HCT116 (cell line): ENCODE measurements at regions of chr19 and their contacts with region 1.

Region 1: GRCh38 chr19:12736995-12737834 is at the start of gene GET3:
- DNase-seq: peak; percentile 100
- ATAC-seq: peak; percentile 86
- H3K4me3 ChIP-seq: peak within 1 kb of the TSS; percentile 88 to 89
- H3K27ac ChIP-seq: peak within 1 kb of the TSS; percentile 78
- H3K4me1 ChIP-seq: peaks cover 25 to 39% of the 10 kb centered on the region in 2 experiments
- H3K27me3 ChIP-seq: no peaks in the 10 kb centered on the region
- CTCF ChIP-seq: no peak
- POLR2A ChIP-seq: peak; percentile 81
- RAD21 ChIP-seq: no peak
- total RNA-seq, gene GET3: 77.6 TPM

Region 2: DNA sequence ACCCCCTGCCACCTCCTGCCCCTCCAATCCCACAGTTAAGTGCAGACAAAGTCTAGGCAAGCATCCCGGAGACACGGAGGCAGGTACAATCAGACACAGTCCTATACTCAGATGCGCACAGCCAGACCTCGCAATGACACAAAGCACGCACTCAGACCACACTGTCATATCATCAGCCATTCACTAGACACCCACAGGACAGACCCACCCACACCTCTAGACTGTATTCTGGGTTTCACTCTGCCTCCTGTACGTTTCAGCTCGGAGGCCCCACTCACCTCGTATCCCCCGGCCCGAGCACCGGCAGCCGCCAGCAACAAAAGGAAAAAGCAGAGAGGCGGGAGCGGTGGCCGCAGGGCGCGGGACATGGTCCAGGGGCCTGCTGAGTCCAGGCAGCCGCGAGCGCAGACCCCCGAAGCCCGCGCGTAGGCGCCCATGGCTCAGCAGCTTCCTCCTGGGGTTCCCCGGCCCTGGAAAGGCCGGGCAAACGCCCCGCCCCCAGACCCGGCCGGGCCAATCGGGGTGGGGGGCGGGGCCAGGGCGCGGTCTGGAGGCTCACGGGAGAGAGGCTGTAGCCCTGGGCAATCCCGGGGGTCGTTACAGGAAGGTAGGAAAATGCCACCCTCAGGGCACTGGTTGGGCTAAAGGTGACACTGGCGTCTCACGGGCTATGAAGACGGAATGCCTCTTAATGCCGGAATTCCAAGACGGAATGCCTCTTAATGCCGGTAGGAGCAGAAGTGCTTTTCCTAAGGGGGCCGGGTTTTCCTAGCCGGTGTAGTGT is 70.8 kb before region 1 on chr19 and contains the starts of genes MAN2B1 and WDR83:
- CTCF ChIA-PET with region 1: no interaction called
- POLR2A ChIA-PET with region 1: no interaction called
- RAD21 ChIA-PET with region 1: no interaction called
- intact Hi-C with region 1: no loop called
- DNase-seq: no peak
- ATAC-seq: peak; percentile 81
- H3K4me3 ChIP-seq: peak within 1 kb of the TSS; percentile 61 to 84
- H3K27ac ChIP-seq: peak within 1 kb of the TSS; percentile 58
- H3K4me1 ChIP-seq: peaks cover 19 to 37% of the 10 kb centered on the region in 2 experiments
- H3K27me3 ChIP-seq: no peaks in the 10 kb centered on the region
- CTCF ChIP-seq: no peak
- POLR2A ChIP-seq: no peak
- RAD21 ChIP-seq: no peak
- total RNA-seq, gene MAN2B1: 48.3 TPM
- total RNA-seq, gene WDR83: 20.1 TPM

Region 3: GRCh38 chr19:12722566-12723380 is 14.4 kb before region 1 on chr19:
- CTCF ChIA-PET with region 1: interaction called, 17 read pairs
- POLR2A ChIA-PET with region 1: interaction called, 23 read pairs
- RAD21 ChIA-PET with region 1: interaction called in 1 of 2 experiments, 5 read pairs
- intact Hi-C with region 1: no loop called
- DNase-seq: peak; percentile 99
- ATAC-seq: peak; percentile 83
- H3K4me3 ChIP-seq: peak overlapping the region; percentile 82 to 93
- H3K27ac ChIP-seq: peak overlapping the region; percentile 88
- H3K4me1 ChIP-seq: peaks cover 0 to 41% of the 10 kb centered on the region in 2 experiments; a peak in 3 of 4 replicates
- H3K27me3 ChIP-seq: no peaks in the 10 kb centered on the region
- CTCF ChIP-seq: no peak
- POLR2A ChIP-seq: peak; percentile 54
- RAD21 ChIP-seq: no peak

Region 4: DNA sequence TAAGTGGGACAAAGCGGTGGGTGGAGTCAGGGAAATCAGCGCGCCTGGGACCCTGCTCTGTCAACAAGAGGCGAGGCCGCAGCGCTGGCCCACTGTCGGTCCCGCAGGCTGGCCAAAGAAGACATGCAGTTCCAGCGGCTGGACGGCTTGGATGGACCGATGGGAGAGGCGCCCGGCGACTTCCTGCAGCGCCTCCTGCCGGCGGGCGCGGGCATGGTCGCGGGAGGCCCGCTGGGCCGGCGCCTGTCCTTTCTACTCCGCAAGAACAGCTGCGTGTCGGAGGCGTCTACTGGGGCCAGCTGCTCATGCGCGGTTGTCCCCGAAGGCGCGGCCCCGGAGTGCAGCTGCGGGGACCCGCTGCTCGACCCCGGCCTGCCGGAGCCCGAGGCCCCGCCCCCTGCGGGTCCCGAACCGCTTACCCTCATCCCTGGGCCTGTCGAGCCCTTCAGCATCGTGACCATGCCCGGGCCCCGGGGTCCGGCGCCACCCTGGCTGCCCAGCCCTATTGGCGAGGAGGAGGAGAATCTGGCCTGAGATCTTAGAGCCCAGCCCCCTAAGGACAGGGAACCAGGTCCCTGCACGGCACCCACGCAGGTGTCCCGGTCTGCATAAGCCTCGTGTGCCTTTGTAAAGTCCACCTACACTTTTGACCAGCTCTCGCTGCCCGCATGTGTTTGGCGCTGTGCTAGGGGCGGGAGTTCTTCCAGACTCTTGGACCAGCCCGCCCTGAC is 20.5 kb after region 1 on chr19:
- CTCF ChIA-PET with region 1: interaction called, 16 read pairs
- POLR2A ChIA-PET with region 1: interaction called, 4 read pairs
- RAD21 ChIA-PET with region 1: no interaction called
- intact Hi-C with region 1: no loop called
- DNase-seq: peak; percentile 52
- ATAC-seq: peak; percentile 87
- H3K4me3 ChIP-seq: peak overlapping the region; percentile 33 to 55
- H3K27ac ChIP-seq: peak overlapping the region; percentile 31; the same call in 1 of the 2 replicates
- H3K4me1 ChIP-seq: peaks cover 4 to 13% of the 10 kb centered on the region in 2 experiments; a peak in 3 of 4 replicates
- H3K27me3 ChIP-seq: no peaks in the 10 kb centered on the region
- CTCF ChIP-seq: peak; percentile 72 to 94 (median 88)
- POLR2A ChIP-seq: no peak
- RAD21 ChIP-seq: peak; percentile 64